B cell (primary cell): ENCODE measurements at regions of chr10 and their contacts with region 1.

Region 1: DNA sequence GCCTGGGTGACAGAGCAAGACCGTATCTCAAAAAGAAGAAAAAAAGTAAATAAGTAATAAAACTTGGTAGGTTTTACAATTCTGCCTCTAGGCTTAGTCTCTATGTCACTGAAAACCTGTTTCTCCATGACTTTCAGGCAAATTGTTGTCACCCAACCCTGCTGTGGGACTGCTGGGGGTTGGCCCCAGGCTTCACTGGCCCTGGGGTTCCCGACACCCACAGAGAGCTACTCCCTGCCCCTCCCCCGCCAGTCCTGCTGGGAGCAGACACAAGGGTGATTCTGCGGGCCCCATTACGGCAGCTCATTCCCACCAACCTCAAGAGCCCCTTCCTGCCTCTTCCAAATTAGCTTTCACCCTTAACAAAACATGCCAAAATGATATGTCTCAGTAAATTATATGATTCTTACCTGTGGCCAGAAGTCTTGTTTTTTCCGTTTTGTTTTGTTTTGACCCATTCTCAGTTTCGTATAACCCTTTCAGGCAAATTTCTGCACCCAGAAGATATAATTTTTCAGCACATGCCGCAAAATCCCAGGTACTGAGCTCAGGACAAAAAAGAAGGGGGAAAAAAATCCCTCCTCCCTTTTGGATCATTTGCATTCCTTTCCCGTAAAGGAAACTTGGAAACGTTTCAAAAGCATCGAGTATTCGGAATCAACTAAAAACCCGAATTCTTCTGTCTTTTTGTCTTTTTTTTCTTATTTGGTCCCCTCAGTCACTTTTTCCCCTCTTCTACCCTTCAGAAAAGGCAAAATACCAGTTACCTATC is 27.9 kb downstream of the CHST15 start:
- DNase-seq: no peak
- ATAC-seq: no peak
- H3K4me3 ChIP-seq: no peak overlapping the region
- H3K4me3 Mint-ChIP-seq: peak overlapping the region; percentile 64
- H3K27ac ChIP-seq: peak overlapping the region in 1 of 2 donors; percentile 67
- H3K27ac Mint-ChIP-seq: peak overlapping the region; percentile 64
- H3K4me1 ChIP-seq: peaks cover 67 to 74% of the 10 kb centered on the region in 2 donors
- H3K4me1 Mint-ChIP-seq: peaks cover 68% of the 10 kb centered on the region
- H3K27me3 ChIP-seq: no peaks in the 10 kb centered on the region
- H3K27me3 Mint-ChIP-seq: no peaks in the 10 kb centered on the region
- CTCF ChIP-seq: no peak

Region 2: DNA sequence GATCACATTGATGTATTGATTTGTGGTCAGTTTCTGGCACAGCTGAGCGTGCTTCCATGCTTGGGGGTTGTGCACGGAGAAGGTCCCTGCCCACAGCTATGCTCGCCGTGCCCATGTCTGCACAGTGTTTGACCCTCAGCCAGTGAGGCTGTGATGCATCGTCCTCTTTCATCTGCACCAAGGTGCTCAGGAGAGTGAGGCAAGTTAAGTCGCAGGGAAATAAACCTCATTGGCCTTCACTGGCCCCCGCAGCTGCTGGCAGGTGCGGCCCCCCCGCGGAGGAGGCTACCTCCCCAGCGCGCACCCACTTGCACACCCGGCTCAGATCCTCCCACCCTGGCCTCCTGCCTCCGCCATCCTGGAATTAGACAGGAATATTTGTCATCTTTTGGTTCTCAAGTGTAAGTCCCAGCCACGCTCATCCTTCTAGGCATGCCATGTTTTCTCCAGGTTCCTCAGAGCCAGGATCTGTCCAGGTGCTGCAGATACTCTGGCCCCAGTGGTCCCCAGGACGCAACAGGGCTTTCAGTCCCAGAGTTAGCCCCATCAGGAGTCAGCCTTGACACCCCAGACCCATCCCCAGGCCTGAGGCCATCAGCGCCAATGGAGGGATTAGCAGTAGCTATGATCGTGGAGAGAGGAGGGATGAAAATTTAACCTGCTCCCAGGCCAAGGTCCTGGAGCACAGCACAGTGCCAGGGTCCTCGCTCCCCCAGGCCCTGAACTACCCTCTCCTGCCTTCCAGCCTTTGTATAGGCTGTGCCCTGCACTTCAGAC is 259.5 kb after region 1 on chr10:
- CTCF ChIA-PET with region 1: no interaction called
- POLR2A ChIA-PET with region 1: interaction called, 12 read pairs
- intact Hi-C with region 1: no loop called
- DNase-seq: no peak
- ATAC-seq: no peak
- H3K4me3 ChIP-seq: no peak overlapping the region
- H3K4me3 Mint-ChIP-seq: no peak overlapping the region
- H3K27ac ChIP-seq: no peak overlapping the region
- H3K27ac Mint-ChIP-seq: no peak overlapping the region
- H3K4me1 ChIP-seq: no peaks in the 10 kb centered on the region
- H3K4me1 Mint-ChIP-seq: no peaks in the 10 kb centered on the region
- H3K27me3 ChIP-seq: peaks cover 0 to 2% (median 0%) of the 10 kb centered on the region in 4 experiments
- H3K27me3 Mint-ChIP-seq: peaks cover 28% of the 10 kb centered on the region
- CTCF ChIP-seq: no peak

Region 3: GRCh38 chr10:124341768-124342135 is 276.2 kb after region 1 on chr10:
- CTCF ChIA-PET with region 1: no interaction called
- POLR2A ChIA-PET with region 1: no interaction called
- intact Hi-C with region 1: no loop called
- DNase-seq: no peak
- ATAC-seq: peak; percentile 45
- H3K4me3 ChIP-seq: no peak overlapping the region
- H3K4me3 Mint-ChIP-seq: peak overlapping the region; percentile 29
- H3K27ac ChIP-seq: no peak overlapping the region
- H3K27ac Mint-ChIP-seq: peak overlapping the region; percentile 50
- H3K4me1 ChIP-seq: peaks cover 9 to 16% of the 10 kb centered on the region in 2 donors
- H3K4me1 Mint-ChIP-seq: peaks cover 15% of the 10 kb centered on the region
- H3K27me3 ChIP-seq: no peaks in the 10 kb centered on the region
- H3K27me3 Mint-ChIP-seq: no peaks in the 10 kb centered on the region
- CTCF ChIP-seq: no peak